ENCODE measurements at regions of chr11 and their contacts with region 1.

Region 1: DNA sequence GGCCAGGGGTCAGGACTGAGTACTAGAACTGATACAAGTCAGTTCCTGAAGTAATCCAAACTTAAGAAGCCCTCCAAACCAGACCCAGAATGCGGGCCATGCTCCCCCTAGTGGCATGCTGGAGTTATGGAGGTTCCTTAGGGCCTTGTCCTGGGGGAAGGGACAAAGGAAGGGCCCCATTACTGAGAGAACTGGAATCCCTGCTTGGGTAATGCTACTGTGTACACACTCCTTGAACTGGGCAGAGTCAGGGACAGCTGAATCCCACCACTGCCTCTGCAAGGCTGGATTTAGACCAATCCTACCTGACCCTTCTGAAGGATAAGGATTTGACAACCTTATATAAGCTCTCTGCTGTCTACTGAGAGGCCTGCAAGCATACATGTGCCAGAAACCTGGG is 97.3 kb upstream of the AKIP1 start:
- DNase-seq: peak; percentile 83
- ATAC-seq: peak; percentile 78
- H3K4me3 ChIP-seq: no peak overlapping the region
- H3K27ac ChIP-seq: no peak overlapping the region
- H3K4me1 ChIP-seq: peaks cover 43% of the 10 kb centered on the region
- H3K27me3 ChIP-seq: no peaks in the 10 kb centered on the region
- CTCF ChIP-seq: peak; percentile 88
- EP300 ChIP-seq: no peak
- POLR2A ChIP-seq: no peak
- RAD21 ChIP-seq: peak; percentile 72

Region 2: DNA sequence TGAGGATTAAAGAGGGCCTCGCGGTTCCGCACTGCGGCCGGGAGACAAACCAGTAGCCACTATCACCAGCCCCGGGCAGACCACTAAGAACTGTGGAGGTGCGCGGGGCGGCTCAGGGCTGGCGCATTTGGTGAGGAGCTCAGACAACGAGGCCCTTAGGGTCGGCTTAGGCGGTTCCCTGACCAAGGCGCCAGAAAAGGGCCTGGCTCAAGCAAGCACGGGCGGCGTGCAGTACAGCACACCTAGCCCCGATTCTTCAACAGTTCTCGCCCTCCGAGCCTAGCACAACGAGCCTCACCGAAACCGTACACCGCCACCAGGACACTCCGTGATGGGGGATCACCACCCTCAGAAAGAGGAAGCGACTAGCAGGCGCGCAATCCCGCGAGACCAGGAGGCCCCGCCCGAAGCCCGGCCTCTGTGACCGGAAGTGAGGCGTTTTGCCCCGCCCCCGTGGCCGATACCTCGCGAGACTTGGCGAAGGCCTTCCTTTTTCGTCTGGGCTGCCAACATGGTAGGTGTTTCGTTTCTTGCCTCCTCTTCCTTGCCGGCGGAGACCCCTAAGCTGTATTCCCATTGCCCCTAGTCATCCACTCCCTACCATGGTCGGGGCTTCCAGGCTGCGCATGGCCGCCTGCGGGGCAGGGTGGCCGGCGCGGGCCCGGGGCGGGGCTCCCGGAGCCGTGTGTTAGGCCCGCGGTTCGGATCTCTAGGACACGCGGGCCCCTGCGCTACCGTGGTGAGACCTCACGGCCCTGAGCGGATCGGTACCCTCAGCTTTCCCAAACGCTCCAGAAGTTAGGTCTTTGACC is 131.1 kb before region 1 on chr11 and contains the starts of genes RPL27A and TRIM66:
- CTCF ChIA-PET with region 1: no interaction called
- POLR2A ChIA-PET with region 1: interaction called, 33 read pairs
- in situ Hi-C with region 1: no loop called
- intact Hi-C with region 1: no loop called
- DNase-seq: peak; percentile 92
- ATAC-seq: peak; percentile 93
- H3K4me3 ChIP-seq: peak within 1 kb of the TSS; percentile 96 to 100 (median 99)
- H3K27ac ChIP-seq: peak within 1 kb of the TSS; percentile 97
- H3K4me1 ChIP-seq: peaks cover 73% of the 10 kb centered on the region
- H3K27me3 ChIP-seq: peaks cover 0 to 7% of the 10 kb centered on the region in 2 experiments; a peak in 1 of 5 replicates
- CTCF ChIP-seq: peak; percentile 26
- EP300 ChIP-seq: no peak; a peak in 1 of 4 replicates
- POLR2A ChIP-seq: peak; percentile 99
- RAD21 ChIP-seq: peak; percentile 20; the same call in 1 of the 2 replicates
- total RNA-seq, gene RPL27A: 2,153 and 2,707 TPM in 2 replicates
- total RNA-seq, gene TRIM66: 4.9 and 5.6 TPM in 2 replicates

Region 3: DNA sequence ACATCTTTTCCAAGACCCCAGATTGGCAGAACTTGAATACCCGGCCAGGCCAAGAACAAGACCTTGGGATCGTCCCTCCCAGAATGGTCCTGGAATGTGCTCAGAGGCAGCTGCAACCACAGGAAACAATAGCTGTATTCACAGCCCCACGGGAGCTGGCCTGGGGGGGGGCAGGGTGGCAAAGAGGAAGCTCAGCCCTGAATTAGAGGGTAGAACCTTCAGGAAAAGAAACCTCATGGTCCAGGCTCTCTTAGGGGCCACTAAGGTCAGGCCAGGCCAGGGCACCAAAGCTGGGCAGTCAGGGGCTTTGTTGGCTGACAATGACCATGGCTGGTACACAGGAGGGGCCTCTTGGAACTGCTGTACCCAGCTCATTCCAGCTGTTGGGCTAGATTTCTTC is 113.8 kb before region 1 on chr11:
- CTCF ChIA-PET with region 1: interaction called, 4 read pairs
- POLR2A ChIA-PET with region 1: interaction called, 14 read pairs
- in situ Hi-C with region 1: loop called (anchors 5 kb)
- intact Hi-C with region 1: no loop called
- DNase-seq: peak; percentile 84
- ATAC-seq: peak; percentile 56
- H3K4me3 ChIP-seq: no peak overlapping the region
- H3K27ac ChIP-seq: peak overlapping the region; percentile 63
- H3K4me1 ChIP-seq: peaks cover 35% of the 10 kb centered on the region
- H3K27me3 ChIP-seq: no peaks in the 10 kb centered on the region
- CTCF ChIP-seq: no peak
- EP300 ChIP-seq: 0 out of 4 replicates have a peak, but pooled peaks of 1 of the 2 experiments have one; percentile 29
- POLR2A ChIP-seq: 0 out of 4 replicates have a peak, but pooled peaks have one; percentile 13 to 21
- RAD21 ChIP-seq: peak; percentile 16; the same call in 1 of the 2 replicates

Region 4: GRCh38 chr11:8794677-8795103 is 19.0 kb before region 1 on chr11:
- CTCF ChIA-PET with region 1: interaction called, 3 read pairs
- POLR2A ChIA-PET with region 1: interaction called, 10 read pairs
- in situ Hi-C with region 1: no loop called
- intact Hi-C with region 1: no loop called
- DNase-seq: peak; percentile 93
- ATAC-seq: peak; percentile 99
- H3K4me3 ChIP-seq: peak overlapping the region; percentile 49 to 73 (median 62)
- H3K27ac ChIP-seq: peak overlapping the region; percentile 75
- H3K4me1 ChIP-seq: peaks cover 50% of the 10 kb centered on the region
- H3K27me3 ChIP-seq: no peaks in the 10 kb centered on the region
- CTCF ChIP-seq: peak; percentile 85
- EP300 ChIP-seq: peak; percentile 37 to 70; a peak in 2 of 4 replicates
- POLR2A ChIP-seq: peak; percentile 65 to 68; a peak in 3 of 4 replicates
- RAD21 ChIP-seq: peak; percentile 85

Region 5: DNA sequence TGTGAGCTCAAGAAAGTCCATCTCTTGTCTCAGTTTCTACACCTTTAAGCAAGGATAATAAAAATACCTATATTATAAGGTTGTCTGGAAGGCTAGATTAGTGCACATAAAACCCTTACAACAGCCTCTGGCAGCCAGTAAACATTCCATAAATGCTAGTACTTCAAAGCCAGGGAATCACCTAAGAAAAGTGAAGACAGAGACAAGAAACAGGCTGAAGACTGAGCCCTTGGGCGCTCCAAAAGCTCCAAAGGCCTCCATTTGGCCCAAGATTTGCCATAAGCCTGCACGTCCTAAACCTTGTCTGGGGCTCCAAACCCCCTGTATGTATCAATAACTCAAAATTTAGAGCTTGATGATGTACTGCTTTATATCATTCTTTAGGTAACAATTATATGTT is 45.1 kb after region 1 on chr11:
- CTCF ChIA-PET with region 1: no interaction called
- POLR2A ChIA-PET with region 1: no interaction called
- in situ Hi-C with region 1: no loop called
- intact Hi-C with region 1: no loop called
- DNase-seq: no peak
- ATAC-seq: no peak
- H3K4me3 ChIP-seq: no peak overlapping the region
- H3K27ac ChIP-seq: no peak overlapping the region
- H3K4me1 ChIP-seq: peaks cover 6% of the 10 kb centered on the region; the same call in 1 of the 2 replicates
- H3K27me3 ChIP-seq: no peaks in the 10 kb centered on the region; a peak in 1 of 5 replicates
- CTCF ChIP-seq: no peak
- EP300 ChIP-seq: no peak
- POLR2A ChIP-seq: no peak
- RAD21 ChIP-seq: no peak

Region 6: GRCh38 chr11:8964324-8965320 is 151.0 kb after region 1 on chr11 and contains the start of gene TMEM9B:
- CTCF ChIA-PET with region 1: interaction called, 3 read pairs
- POLR2A ChIA-PET with region 1: interaction called, 3 read pairs
- in situ Hi-C with region 1: no loop called
- intact Hi-C with region 1: loop called (anchors 1 kb)
- DNase-seq: peak; percentile 84
- ATAC-seq: peak; percentile 92
- H3K4me3 ChIP-seq: peak within 1 kb of the TSS; percentile 86 to 93 (median 89)
- H3K27ac ChIP-seq: peak within 1 kb of the TSS; percentile 88
- H3K4me1 ChIP-seq: peaks cover 19% of the 10 kb centered on the region
- H3K27me3 ChIP-seq: no peaks in the 10 kb centered on the region
- CTCF ChIP-seq: 0 out of 2 replicates have a peak, but pooled peaks have one; percentile 16
- EP300 ChIP-seq: no peak
- POLR2A ChIP-seq: peak; percentile 76 to 92
- RAD21 ChIP-seq: peak; percentile 46
- total RNA-seq, gene TMEM9B: 17.4 and 20.8 TPM in 2 replicates

Measured in HepG2 (cell line).